ENCODE measurements at regions of chr14 and their contacts with region 1.

Region 1: DNA sequence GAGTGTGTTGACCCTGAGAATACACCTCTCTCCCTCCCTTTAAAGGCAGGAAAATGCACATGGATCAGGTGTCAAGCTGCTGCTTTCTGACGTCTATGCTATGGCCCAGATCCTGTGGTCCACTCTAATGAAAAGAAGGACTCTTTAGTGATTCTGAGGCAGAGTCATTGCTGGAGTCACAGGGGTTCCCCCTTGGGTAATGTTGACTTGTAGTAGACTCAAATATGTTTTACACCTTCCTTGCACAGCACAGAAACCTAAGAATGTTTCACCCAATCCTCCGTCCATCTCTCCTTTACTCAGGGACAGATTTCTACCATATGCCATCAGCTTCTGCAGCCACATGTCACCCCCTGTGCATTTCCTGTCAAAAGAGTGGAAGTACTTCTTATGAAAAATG is 525.4 kb downstream of the TMEM121 start:
- DNase-seq: no peak

Region 2: DNA sequence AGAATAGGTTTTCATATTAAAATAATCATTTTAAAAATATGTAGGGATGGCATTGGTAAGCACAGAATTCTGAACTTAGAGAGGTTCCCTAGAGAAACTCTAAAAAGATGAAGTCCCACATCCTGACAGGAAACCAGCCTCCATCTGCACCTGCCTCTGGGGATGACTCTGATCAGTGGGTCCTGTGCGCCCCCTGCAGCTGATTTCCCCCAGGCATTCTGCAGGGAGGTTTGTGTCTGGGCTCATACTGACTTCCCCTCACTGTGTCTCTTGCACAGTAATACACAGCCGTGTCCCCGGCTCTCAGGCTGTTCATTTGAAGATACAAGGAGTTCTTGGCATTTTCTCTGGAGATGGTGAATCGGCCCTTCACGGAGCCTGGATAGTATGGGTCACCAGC is 77.5 kb after region 1 on chr14:
- in situ Hi-C with region 1: loop called (anchors 10 kb)
- DNase-seq: peak; percentile 93

Measured in KBM-7 (cell line).